ENCODE measurements at regions of chr12 and their contacts with region 1.

Region 1: GRCh38 chr12:111599459-111600204 is 517 bp upstream of the ATXN2 start:
- DNase-seq: peak; percentile 80

Region 2: GRCh38 chr12:111368788-111369495 is 230.7 kb before region 1 on chr12 and contains the start of gene PHETA1:
- in situ Hi-C with region 1: no loop called
- DNase-seq: peak; percentile 92
- total RNA-seq, gene PHETA1: 10.3 and 16.9 TPM in 2 replicates

Region 3: GRCh38 chr12:111685744-111686517 is 86.3 kb after region 1 on chr12 and contains the starts of genes ACAD10 and BRAP:
- in situ Hi-C with region 1: loop called (anchors 25 kb)
- DNase-seq: peak; percentile 90
- total RNA-seq, gene ACAD10: 28.0 and 39.2 TPM in 2 replicates
- total RNA-seq, gene BRAP: 15.8 and 17.0 TPM in 2 replicates

Region 4: DNA sequence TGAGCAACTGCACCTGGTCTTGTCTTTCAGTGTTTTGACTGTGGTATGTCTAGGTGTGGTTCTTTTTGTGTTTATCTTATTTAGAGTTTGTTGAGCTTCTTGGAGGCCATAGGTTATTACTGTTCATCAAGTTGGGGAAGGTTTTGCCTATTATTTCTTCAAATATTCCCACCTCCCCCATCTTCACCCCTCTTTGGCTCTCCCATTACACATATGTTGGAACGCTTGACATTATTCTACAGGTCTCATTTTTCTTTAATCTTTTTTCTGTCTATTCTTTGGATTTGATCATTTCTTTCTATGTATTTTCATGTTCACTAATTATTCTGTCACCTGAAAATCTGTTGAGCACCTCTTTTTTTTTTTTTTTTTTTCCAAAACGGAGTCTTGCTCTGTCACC is 258.6 kb after region 1 on chr12:
- in situ Hi-C with region 1: no loop called
- DNase-seq: no peak